ENCODE measurements at regions of chr4 and their contacts with region 1.

Region 1: DNA sequence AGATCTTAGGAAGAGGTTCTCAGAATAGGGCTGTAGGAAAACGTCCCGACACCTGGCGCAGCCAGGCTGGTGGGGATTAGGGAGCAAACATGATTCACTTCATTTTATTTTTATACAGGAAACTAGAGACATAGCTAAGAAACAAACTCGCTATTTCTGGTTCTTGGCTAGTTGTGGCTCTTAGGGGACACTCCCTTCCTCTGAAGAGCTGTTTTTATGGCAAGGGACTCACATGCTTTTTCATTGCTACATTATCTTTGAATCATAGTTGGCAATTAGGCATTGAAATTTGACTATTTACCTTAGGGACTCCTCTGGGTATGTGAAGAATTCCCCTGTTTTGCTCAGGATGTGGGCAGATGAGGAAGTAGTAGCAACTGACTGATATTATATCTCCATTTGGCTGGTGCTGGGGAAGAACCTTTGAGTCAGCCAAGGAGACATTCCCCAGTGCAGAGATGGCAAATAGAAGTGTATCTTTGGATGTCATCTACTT is 174.5 kb downstream of the SMIM20 start:
- DNase-seq: no peak
- H3K4me3 ChIP-seq: no peak overlapping the region
- H3K27ac ChIP-seq: peak overlapping the region in 1 of 2 donors; percentile 38
- H3K4me1 ChIP-seq: peaks cover 0 to 3% of the 10 kb centered on the region in 2 donors
- H3K27me3 ChIP-seq: no peaks in the 10 kb centered on the region
- CTCF ChIP-seq: no peak

Region 2: GRCh38 chr4:25986807-25987206 is 101.7 kb before region 1 on chr4:
- intact Hi-C with region 1: loop called (anchors 5 kb)
- DNase-seq: peak in 1 of 2 donors; percentile 15
- H3K4me3 ChIP-seq: no peak overlapping the region
- H3K27ac ChIP-seq: no peak overlapping the region
- H3K4me1 ChIP-seq: peaks cover 0 to 9% of the 10 kb centered on the region in 2 donors
- H3K27me3 ChIP-seq: no peaks in the 10 kb centered on the region
- CTCF ChIP-seq: no peak